ENCODE measurements at regions of chr16 and their contacts with region 1.

Region 1: DNA sequence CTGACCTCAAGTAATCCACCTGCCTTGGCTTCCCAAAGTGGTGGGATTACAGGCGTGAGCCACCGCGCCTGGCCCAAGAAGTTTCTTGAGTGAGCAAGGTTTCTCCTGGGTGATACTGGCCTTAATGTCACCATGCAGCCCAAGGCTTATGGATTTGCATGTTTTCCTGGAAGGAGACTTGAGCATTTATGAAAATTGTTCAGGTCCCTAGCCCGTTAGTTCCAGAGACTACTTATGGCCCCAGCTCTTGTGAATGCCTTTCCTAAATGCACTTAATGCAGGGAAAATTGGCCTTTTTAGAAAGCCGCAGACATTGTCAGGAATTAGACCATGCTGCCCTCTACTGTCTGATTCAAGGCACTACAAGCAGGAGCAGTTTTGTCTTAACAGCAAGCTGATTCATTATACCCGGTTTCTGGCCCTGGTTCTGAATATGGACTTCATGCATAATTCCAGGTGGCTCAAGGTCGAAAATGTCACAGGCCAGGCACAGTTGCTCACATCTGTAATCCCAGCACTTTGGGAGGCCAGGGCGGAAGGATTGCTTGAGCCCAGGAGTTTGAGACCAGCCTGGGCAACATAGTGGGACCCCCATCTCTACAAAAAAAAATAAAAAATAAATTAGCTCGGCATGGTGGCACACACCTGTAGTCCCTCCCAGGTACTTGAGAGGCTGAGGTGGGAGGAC is 91.3 kb downstream of the SNX29 start:
- DNase-seq: peak; percentile 80
- H3K4me3 ChIP-seq: no peak overlapping the region
- H3K27ac ChIP-seq: no peak overlapping the region
- H3K4me1 ChIP-seq: peaks cover under 1% of the 10 kb centered on the region
- H3K27me3 ChIP-seq: no peaks in the 10 kb centered on the region
- CTCF ChIP-seq: peak; percentile 82 to 84
- POLR2A ChIP-seq: no peak

Region 2: DNA sequence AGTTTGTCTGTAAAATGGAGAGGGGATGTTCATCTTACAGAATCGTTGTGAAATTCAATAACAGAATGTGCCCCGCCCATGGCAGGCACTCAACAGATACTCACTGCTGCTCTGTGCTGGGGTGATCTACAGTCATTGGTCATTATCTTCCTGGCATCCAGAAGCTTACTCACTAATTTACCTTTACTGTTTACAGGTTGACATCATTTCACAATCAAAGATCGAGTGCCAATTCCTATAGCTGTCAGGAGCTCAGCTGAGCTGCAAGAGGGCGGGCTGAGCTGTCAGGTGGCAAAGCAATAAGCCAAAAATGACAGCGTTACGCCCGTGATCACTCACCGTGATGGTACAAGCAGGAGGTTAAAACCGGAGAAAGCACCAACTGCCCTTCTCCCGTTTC is 532.4 kb before region 1 on chr16:
- CTCF ChIA-PET with region 1: interaction called, 11 read pairs
- POLR2A ChIA-PET with region 1: no interaction called
- dilution Hi-C with region 1: no loop called
- intact Hi-C with region 1: no loop called
- DNase-seq: no peak
- H3K4me3 ChIP-seq: no peak overlapping the region
- H3K27ac ChIP-seq: no peak overlapping the region
- H3K4me1 ChIP-seq: peaks cover 3% of the 10 kb centered on the region
- H3K27me3 ChIP-seq: no peaks in the 10 kb centered on the region
- CTCF ChIP-seq: no peak
- POLR2A ChIP-seq: no peak

Region 3: DNA sequence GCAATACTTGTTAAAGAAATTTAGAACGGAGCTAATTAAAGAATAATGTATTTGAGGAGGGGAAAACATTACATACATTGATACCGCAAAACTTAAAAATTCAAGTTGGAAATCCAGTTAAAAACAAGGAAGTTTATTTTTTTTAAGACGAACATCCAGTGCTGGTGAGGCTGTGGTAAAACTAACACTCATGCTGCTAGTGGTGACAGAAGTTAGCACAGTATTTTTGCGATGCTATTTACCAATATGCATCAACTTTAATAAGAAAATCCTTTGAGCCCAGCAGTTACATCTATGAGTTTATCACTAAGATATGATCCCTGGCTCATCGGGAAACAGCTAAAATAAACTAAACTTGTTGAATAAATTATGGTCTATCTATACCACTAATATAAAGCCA is 183.8 kb before region 1 on chr16:
- CTCF ChIA-PET with region 1: interaction called, 27 read pairs
- POLR2A ChIA-PET with region 1: no interaction called
- dilution Hi-C with region 1: no loop called
- intact Hi-C with region 1: no loop called
- DNase-seq: no peak
- H3K4me3 ChIP-seq: no peak overlapping the region
- H3K27ac ChIP-seq: no peak overlapping the region
- H3K4me1 ChIP-seq: no peaks in the 10 kb centered on the region
- H3K27me3 ChIP-seq: no peaks in the 10 kb centered on the region
- CTCF ChIP-seq: no peak
- POLR2A ChIP-seq: no peak

Region 4: DNA sequence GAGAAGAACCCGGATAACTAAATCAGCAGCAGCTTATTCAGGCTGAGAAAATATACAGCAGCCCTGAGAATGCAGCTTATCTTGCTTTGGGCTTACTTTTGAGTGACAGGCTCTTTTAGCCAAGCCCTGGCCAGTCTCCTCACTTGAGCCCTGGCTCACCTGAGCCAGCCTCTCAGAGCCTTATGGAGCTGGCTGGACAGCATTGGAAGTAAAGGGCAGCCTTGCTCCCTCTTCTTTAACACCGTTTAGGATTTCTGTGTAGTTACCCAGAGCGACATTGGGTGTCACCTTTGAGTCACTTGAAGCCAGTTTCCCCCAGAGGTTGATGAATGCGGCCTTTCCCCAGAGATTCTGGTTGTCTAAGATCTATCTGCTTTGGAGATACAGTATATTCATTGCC is 118.3 kb before region 1 on chr16:
- CTCF ChIA-PET with region 1: interaction called, 124 read pairs
- POLR2A ChIA-PET with region 1: no interaction called
- dilution Hi-C with region 1: no loop called
- intact Hi-C with region 1: loop called (anchors 1 kb)
- DNase-seq: peak; percentile 21
- H3K4me3 ChIP-seq: no peak overlapping the region
- H3K27ac ChIP-seq: no peak overlapping the region
- H3K4me1 ChIP-seq: no peaks in the 10 kb centered on the region
- H3K27me3 ChIP-seq: peaks cover 0 to 2% of the 10 kb centered on the region in 2 experiments
- CTCF ChIP-seq: peak; percentile 22 to 33
- POLR2A ChIP-seq: no peak

Region 5: DNA sequence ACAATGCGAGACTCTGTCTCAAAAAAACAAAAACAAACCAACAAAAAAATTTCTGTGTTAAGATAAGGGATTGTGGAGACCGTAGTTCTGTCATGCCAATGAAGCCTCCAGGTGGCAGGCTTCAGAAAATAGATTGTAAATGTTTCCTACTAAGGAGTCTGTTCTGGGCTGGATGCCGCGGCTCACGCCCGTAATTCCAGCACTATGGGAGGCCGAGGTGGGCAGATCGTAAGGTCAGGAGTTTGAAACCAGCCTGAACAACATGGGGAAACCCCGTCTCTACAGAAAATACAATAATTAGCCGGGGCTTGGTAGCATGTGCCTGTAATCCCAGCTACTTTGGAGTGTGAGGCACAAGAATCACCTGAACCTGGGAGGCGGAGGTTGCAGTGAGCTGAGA is 95.7 kb before region 1 on chr16:
- CTCF ChIA-PET with region 1: interaction called, 37 read pairs
- POLR2A ChIA-PET with region 1: no interaction called
- dilution Hi-C with region 1: no loop called
- intact Hi-C with region 1: loop called (anchors 1 kb)
- DNase-seq: no peak
- H3K4me3 ChIP-seq: no peak overlapping the region
- H3K27ac ChIP-seq: no peak overlapping the region
- H3K4me1 ChIP-seq: peaks cover 6% of the 10 kb centered on the region
- H3K27me3 ChIP-seq: no peaks in the 10 kb centered on the region
- CTCF ChIP-seq: peak in 1 of 2 donors; percentile 16
- POLR2A ChIP-seq: no peak

Region 6: GRCh38 chr16:12057266-12057665 is 10.6 kb before region 1 on chr16:
- CTCF ChIA-PET with region 1: interaction called, 19 read pairs
- POLR2A ChIA-PET with region 1: no interaction called
- dilution Hi-C with region 1: no loop called
- intact Hi-C with region 1: no loop called
- DNase-seq: no peak
- H3K4me3 ChIP-seq: no peak overlapping the region
- H3K27ac ChIP-seq: no peak overlapping the region
- H3K4me1 ChIP-seq: no peaks in the 10 kb centered on the region
- H3K27me3 ChIP-seq: no peaks in the 10 kb centered on the region
- CTCF ChIP-seq: no peak
- POLR2A ChIP-seq: no peak

Region 7: GRCh38 chr16:12095275-12096156 is 27.7 kb after region 1 on chr16:
- CTCF ChIA-PET with region 1: interaction called, 13 read pairs
- POLR2A ChIA-PET with region 1: no interaction called
- dilution Hi-C with region 1: no loop called
- intact Hi-C with region 1: no loop called
- DNase-seq: peak; percentile 64
- H3K4me3 ChIP-seq: no peak overlapping the region
- H3K27ac ChIP-seq: no peak overlapping the region
- H3K4me1 ChIP-seq: peaks cover 19% of the 10 kb centered on the region
- H3K27me3 ChIP-seq: no peaks in the 10 kb centered on the region
- CTCF ChIP-seq: peak; percentile 76 to 87
- POLR2A ChIP-seq: no peak

Region 8: GRCh38 chr16:12500771-12501170 is 432.9 kb after region 1 on chr16:
- CTCF ChIA-PET with region 1: no interaction called
- POLR2A ChIA-PET with region 1: no interaction called
- dilution Hi-C with region 1: no loop called
- intact Hi-C with region 1: no loop called
- DNase-seq: no peak
- H3K4me3 ChIP-seq: no peak overlapping the region
- H3K27ac ChIP-seq: no peak overlapping the region
- H3K4me1 ChIP-seq: no peaks in the 10 kb centered on the region
- H3K27me3 ChIP-seq: no peaks in the 10 kb centered on the region
- CTCF ChIP-seq: no peak
- POLR2A ChIP-seq: no peak